A673 (cell line): ENCODE measurements at regions of chr19 and their contacts with region 1.

Region 1: DNA sequence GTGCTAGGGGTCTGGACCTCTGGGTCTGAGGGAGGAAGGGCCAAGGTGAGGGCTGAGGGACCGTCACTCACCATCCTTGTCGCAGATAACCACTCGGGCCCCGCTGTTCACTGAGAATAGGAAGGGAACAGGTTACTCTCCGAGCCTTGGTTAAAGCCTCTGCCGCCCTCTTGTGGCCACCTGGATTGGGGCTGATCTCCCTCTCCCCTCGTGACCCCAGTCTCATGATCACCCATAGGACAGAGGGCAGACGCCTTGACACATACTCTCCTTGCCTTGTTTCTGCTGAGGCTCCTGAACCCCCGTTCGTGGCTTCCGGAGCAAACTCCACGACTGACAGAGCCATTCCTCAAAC is 580 bp downstream of the HSD17B14 start:
- DNase-seq: peak; percentile 88
- H3K4me3 ChIP-seq: peak overlapping the region; percentile 41
- H3K27ac ChIP-seq: no peak overlapping the region
- H3K4me1 ChIP-seq: peaks cover 13% of the 10 kb centered on the region
- H3K27me3 ChIP-seq: no peaks in the 10 kb centered on the region
- CTCF ChIP-seq: peak; percentile 95

Region 2: DNA sequence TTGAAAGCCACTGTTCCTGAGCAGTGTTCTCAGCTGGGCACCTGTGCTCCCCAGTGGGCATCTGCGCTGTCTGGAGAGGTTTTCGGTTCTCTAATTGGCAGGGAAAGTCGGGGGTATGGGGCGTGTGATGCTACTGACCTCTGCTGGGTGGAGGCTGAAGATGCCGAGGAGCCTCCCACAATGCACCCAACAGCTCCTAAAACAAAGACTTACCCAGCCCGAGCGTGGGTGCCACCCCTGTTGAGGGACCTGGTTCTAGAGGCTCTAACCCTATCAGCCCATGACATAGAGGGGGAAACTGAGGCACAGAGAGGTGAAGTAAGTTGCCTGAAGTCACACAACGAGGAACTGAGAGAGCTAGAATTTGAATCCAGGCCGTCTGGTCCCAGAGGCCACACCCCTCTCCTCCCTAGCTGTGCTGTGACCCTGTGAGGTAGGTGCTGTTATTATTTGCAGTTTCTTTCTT is 226.9 kb before region 1 on chr19:
- CTCF ChIA-PET with region 1: interaction called, 12 read pairs
- POLR2A ChIA-PET with region 1: no interaction called
- intact Hi-C with region 1: no loop called
- DNase-seq: peak; percentile 69
- H3K4me3 ChIP-seq: no peak overlapping the region
- H3K27ac ChIP-seq: no peak overlapping the region
- H3K4me1 ChIP-seq: no peaks in the 10 kb centered on the region
- H3K27me3 ChIP-seq: no peaks in the 10 kb centered on the region
- CTCF ChIP-seq: peak; percentile 68

Region 3: DNA sequence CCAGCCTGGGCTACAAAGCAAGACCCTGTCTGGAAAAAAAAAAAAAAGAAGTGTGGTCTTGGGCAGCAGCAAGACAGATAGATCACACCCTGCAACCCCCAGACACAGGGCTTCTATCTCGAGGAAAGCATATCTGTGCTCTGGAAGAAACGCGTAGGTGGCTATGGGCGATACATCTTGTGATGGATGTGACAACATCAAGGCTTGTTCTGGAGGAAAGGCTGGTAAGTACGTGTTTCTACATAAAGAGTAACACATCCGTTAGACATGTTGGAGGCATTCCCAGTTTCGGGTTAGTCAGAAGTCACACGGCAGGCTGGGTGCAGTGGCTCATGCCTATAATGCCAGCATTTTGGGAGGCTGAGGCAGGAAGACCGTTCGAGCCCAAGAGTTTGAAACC is 91.2 kb after region 1 on chr19:
- CTCF ChIA-PET with region 1: no interaction called
- POLR2A ChIA-PET with region 1: no interaction called
- intact Hi-C with region 1: no loop called
- DNase-seq: peak; percentile 60
- H3K4me3 ChIP-seq: no peak overlapping the region
- H3K27ac ChIP-seq: no peak overlapping the region
- H3K4me1 ChIP-seq: no peaks in the 10 kb centered on the region
- H3K27me3 ChIP-seq: no peaks in the 10 kb centered on the region
- CTCF ChIP-seq: no peak

Region 4: GRCh38 chr19:49244256-49244655 is 408.5 kb after region 1 on chr19:
- CTCF ChIA-PET with region 1: no interaction called
- POLR2A ChIA-PET with region 1: interaction called, 14 read pairs
- intact Hi-C with region 1: no loop called
- DNase-seq: no peak
- H3K4me3 ChIP-seq: no peak overlapping the region
- H3K27ac ChIP-seq: no peak overlapping the region
- H3K4me1 ChIP-seq: no peaks in the 10 kb centered on the region
- H3K27me3 ChIP-seq: no peaks in the 10 kb centered on the region
- CTCF ChIP-seq: no peak